WTC11 (cell line): ENCODE measurements at regions of chr19 and their contacts with region 1.

Region 1: DNA sequence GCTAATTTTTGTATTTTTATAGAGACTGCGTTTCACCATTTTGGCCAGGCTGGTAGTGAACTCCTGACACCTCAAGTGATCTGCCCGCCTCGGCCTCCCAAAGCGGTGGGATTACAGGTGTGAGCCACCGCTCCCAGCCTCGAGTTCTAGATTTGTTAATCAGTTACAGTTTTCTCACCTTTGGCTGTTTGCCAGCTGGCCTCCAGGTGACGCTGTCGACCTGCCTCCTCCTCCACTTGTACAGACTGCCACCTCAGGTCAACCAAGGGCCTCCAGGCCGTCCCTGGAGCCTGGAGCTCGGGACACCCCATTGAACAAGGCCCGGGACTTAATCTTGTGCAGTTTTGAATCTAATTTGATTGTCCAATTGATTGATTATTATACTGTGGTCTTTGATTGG is 45.5 kb downstream of the IER2 start:
- DNase-seq: peak; percentile 87
- ATAC-seq: peak; percentile 97
- H3K4me3 Mint-ChIP-seq: no peak overlapping the region
- H3K27ac Mint-ChIP-seq: no peak overlapping the region
- H3K4me1 Mint-ChIP-seq: no peaks in the 10 kb centered on the region
- H3K27me3 Mint-ChIP-seq: no peaks in the 10 kb centered on the region
- CTCF ChIP-seq: peak; percentile 71

Region 2: GRCh38 chr19:13155472-13156359 is 40.0 kb before region 1 on chr19:
- CTCF ChIA-PET with region 1: interaction called, 31 read pairs
- POLR2A ChIA-PET with region 1: interaction called, 18 read pairs
- DNase-seq: peak; percentile 89
- ATAC-seq: peak; percentile 35
- H3K4me3 Mint-ChIP-seq: peak overlapping the region; percentile 92
- H3K27ac Mint-ChIP-seq: peak overlapping the region; percentile 99
- H3K4me1 Mint-ChIP-seq: peaks cover 27% of the 10 kb centered on the region
- H3K27me3 Mint-ChIP-seq: peaks cover 7% of the 10 kb centered on the region; the same call in 1 of the 2 replicates
- CTCF ChIP-seq: no peak

Region 3: DNA sequence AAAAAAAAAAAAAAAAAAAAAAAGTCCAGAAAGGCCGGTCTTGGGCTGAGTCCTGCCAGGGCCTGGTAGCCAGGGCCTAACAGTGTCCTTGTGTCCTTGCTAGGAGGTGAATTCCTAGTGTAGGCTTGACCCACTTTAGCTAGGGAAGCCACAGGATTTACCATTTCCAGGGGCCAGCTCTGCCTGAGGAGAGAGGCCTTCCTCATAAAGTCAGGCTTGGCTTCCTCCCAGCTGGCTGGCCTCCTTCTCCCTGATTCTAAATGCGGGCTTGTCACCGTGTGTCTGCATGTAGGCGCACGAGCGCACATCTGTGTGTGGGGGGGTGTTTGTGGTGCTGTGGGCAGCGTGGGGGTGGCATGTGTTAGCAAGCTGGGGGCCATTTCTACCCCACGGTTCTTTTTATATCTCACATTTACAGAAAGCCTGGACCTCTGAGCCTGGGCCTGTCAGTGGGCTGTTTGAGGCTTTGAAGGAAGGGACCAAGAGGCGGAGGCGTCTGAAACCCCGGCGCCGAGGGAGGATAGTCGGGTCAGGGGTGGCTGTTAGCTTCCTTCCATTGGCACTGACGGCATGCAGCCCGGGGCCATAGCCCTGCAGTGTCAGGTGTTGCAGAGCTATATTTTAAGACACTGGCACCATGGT is 13.8 kb before region 1 on chr19:
- CTCF ChIA-PET with region 1: interaction called, 86 read pairs
- POLR2A ChIA-PET with region 1: no interaction called
- DNase-seq: no peak
- ATAC-seq: peak; percentile 28; the same call in 1 of the 2 replicates
- H3K4me3 Mint-ChIP-seq: no peak overlapping the region
- H3K27ac Mint-ChIP-seq: peak overlapping the region; percentile 41; the same call in 1 of the 2 replicates
- H3K4me1 Mint-ChIP-seq: peaks cover 11% of the 10 kb centered on the region
- H3K27me3 Mint-ChIP-seq: no peaks in the 10 kb centered on the region
- CTCF ChIP-seq: no peak

Region 4: GRCh38 chr19:13225973-13226865 is 30.5 kb after region 1 on chr19:
- CTCF ChIA-PET with region 1: interaction called, 14 read pairs
- POLR2A ChIA-PET with region 1: no interaction called
- DNase-seq: no peak
- ATAC-seq: no peak
- H3K4me3 Mint-ChIP-seq: no peak overlapping the region
- H3K27ac Mint-ChIP-seq: no peak overlapping the region; the same call in 1 of the 2 replicates
- H3K4me1 Mint-ChIP-seq: peaks cover 7% of the 10 kb centered on the region
- H3K27me3 Mint-ChIP-seq: no peaks in the 10 kb centered on the region
- CTCF ChIP-seq: no peak

Region 5: DNA sequence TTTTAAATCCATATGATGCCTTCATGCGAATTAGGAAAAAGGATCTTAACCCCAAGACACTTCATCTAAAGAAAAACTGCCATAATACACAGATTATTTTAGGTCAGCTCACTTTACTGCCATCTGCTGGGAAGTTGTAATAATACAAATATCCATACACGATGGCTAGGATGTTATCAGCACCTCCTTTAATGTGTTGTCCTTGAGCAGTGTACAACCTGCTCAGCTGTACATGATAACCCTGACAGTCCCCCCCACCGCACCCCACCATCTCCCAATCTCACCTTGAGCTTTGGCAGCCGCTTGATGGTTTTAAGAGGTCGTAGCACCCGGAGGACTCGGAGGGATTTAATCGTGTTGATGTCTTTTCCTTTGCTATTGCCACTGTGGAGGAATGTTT is 66.8 kb after region 1 on chr19:
- CTCF ChIA-PET with region 1: interaction called, 68 read pairs
- POLR2A ChIA-PET with region 1: no interaction called
- DNase-seq: no peak
- ATAC-seq: no peak
- H3K4me3 Mint-ChIP-seq: no peak overlapping the region
- H3K27ac Mint-ChIP-seq: no peak overlapping the region
- H3K4me1 Mint-ChIP-seq: peaks cover 4% of the 10 kb centered on the region; the same call in 1 of the 2 replicates
- H3K27me3 Mint-ChIP-seq: no peaks in the 10 kb centered on the region; the same call in 1 of the 2 replicates
- CTCF ChIP-seq: peak; percentile 19; the same call in 1 of the 2 replicates

Region 6: GRCh38 chr19:13574933-13575332 is 379.3 kb after region 1 on chr19:
- CTCF ChIA-PET with region 1: interaction called, 16 read pairs
- POLR2A ChIA-PET with region 1: no interaction called
- DNase-seq: peak; percentile 47
- ATAC-seq: peak; percentile 53; the same call in 1 of the 2 replicates
- H3K4me3 Mint-ChIP-seq: no peak overlapping the region
- H3K27ac Mint-ChIP-seq: no peak overlapping the region
- H3K4me1 Mint-ChIP-seq: peaks cover 3% of the 10 kb centered on the region; the same call in 1 of the 2 replicates
- H3K27me3 Mint-ChIP-seq: peaks cover 10% of the 10 kb centered on the region
- CTCF ChIP-seq: no peak